ENCODE measurements at regions of chr4 and their contacts with region 1.

Region 1: DNA sequence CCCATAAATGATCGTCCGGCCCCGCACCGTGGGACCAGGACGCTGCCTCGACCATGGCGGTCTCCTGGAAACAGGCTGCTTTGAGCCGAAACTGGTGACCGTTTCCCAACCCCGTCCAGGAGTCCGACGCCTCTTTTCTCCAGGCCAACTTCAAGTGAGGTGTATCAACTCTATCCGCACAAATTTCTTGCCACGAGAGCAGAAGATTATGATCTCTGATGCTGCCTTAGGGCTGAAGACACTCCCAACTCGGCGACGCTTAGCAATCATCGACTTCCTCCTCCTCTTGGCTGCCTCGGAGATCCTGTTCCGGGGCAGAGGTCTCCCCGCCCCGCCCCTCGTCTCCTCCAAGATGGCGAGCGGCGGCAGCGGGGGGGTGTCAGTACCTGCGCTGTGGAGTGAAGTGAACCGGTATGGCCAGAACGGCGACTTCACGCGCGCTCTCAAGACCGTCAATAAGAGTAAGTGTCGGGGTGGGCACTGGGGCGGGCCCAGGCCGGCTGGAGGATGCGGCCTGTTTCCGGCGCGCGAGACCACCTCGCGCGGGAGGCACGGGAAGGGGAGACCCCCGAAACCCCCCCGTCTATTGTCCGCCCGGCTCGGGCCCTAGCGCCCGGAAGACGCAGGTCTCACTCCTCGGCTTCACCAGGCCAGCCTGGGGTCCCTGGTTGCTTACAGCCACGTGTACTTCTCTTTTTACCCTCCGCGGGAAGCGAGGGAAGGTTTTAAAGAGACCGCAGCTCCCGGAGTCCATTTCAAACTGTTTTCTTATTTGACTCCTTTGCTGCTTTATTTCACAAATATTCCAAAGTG is at the start of gene SRP72:
- DNase-seq: peak; percentile 91
- H3K4me3 Mint-ChIP-seq: peak within 1 kb of the TSS; percentile 100
- H3K27ac Mint-ChIP-seq: peak within 1 kb of the TSS; percentile 99
- H3K4me1 Mint-ChIP-seq: peaks cover 31% of the 10 kb centered on the region
- H3K27me3 Mint-ChIP-seq: no peaks in the 10 kb centered on the region
- CTCF ChIP-seq: no peak
- total RNA-seq, gene SRP72: 348 and 419 TPM in 2 replicates

Region 2: DNA sequence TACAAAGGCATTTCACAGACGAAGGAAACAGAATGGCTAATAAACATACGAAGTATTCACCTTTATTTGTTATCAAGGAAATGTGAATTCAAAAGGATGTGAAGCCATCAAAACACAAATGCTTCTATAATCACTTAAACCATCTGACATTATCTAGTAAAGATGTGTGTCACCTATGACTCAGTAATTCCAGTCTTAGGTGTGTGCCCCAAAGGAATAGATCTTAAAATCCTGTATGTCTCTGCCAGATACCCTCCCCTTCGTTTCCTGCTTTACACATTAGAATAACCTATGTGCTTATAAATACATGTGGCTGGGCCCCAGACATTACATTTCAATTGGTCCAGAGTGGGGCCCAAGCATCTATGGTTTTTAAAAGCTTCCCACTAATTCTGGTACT is 560.5 kb before region 1 on chr4:
- CTCF ChIA-PET with region 1: no interaction called
- POLR2A ChIA-PET with region 1: no interaction called
- intact Hi-C with region 1: no loop called
- DNase-seq: peak; percentile 53
- H3K4me3 Mint-ChIP-seq: no peak overlapping the region
- H3K27ac Mint-ChIP-seq: no peak overlapping the region
- H3K4me1 Mint-ChIP-seq: peaks cover 9% of the 10 kb centered on the region
- H3K27me3 Mint-ChIP-seq: no peaks in the 10 kb centered on the region
- CTCF ChIP-seq: no peak

Region 3: DNA sequence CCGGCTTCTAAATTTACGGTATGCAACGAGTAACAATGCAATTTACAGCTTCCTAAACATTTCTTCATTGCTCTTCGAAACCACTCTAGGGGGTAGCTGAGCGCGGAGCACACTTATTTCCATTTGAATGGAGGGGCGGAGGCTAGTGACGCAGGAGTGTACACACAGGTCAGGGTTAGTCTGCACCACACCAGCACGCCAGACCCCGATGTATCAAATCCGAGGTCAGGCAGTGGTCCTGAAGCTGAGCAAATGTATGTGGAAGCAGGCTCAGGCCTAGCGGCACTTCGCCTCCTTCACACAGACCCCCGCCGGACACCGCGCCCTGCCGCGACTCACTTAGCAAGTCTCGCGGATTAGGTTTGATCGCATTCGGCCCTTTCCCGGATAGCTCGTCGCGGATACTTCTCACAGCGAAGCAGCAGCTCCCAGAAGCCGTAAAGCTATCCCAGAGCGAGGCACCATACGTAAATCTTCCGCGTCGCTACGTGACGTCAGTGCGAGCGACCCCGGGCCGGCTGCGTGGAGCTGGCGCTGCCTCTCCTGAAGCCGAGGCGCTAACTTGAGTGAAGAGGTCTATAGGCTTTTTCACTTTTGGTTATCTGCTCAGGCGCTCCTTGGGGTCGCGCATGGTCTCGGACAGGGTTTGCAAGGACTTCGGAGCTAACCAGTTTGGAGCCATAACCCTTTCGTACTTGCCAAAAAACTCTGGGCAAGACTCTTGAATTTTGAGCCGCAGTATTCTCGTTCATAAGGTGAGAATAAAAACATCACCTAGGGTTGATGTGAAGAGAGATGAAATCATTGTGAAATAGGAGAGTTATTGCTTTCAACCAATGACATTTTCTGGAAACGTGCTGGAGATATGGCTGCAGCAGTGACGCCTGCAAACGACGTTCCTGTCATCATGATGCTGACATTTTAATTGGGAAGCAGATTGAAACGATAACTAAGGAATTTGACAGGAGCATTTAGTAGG is 80.2 kb before region 1 on chr4 and contains the start of gene AASDH:
- CTCF ChIA-PET with region 1: no interaction called
- POLR2A ChIA-PET with region 1: interaction called, 23 read pairs
- intact Hi-C with region 1: loop called (anchors 1 kb)
- DNase-seq: peak; percentile 94
- H3K4me3 Mint-ChIP-seq: peak within 1 kb of the TSS; percentile 96
- H3K27ac Mint-ChIP-seq: peak within 1 kb of the TSS; percentile 99
- H3K4me1 Mint-ChIP-seq: peaks cover 29% of the 10 kb centered on the region
- H3K27me3 Mint-ChIP-seq: no peaks in the 10 kb centered on the region
- CTCF ChIP-seq: no peak
- total RNA-seq, gene AASDH: 10.8 and 12.9 TPM in 2 replicates

Region 4: GRCh38 chr4:56424697-56425514 is 42.6 kb before region 1 on chr4:
- CTCF ChIA-PET with region 1: interaction called, 6 read pairs
- POLR2A ChIA-PET with region 1: interaction called, 11 read pairs
- intact Hi-C with region 1: loop called (anchors 5 kb)
- DNase-seq: peak; percentile 53
- H3K4me3 Mint-ChIP-seq: no peak overlapping the region
- H3K27ac Mint-ChIP-seq: no peak overlapping the region
- H3K4me1 Mint-ChIP-seq: peaks cover 13% of the 10 kb centered on the region
- H3K27me3 Mint-ChIP-seq: no peaks in the 10 kb centered on the region
- CTCF ChIP-seq: peak; percentile 48

Region 5: GRCh38 chr4:56480691-56481090 is 13.2 kb after region 1 on chr4:
- CTCF ChIA-PET with region 1: no interaction called
- POLR2A ChIA-PET with region 1: interaction called, 13 read pairs
- intact Hi-C with region 1: no loop called
- DNase-seq: no peak
- H3K4me3 Mint-ChIP-seq: no peak overlapping the region
- H3K27ac Mint-ChIP-seq: no peak overlapping the region
- H3K4me1 Mint-ChIP-seq: no peaks in the 10 kb centered on the region
- H3K27me3 Mint-ChIP-seq: no peaks in the 10 kb centered on the region
- CTCF ChIP-seq: no peak

Region 6: DNA sequence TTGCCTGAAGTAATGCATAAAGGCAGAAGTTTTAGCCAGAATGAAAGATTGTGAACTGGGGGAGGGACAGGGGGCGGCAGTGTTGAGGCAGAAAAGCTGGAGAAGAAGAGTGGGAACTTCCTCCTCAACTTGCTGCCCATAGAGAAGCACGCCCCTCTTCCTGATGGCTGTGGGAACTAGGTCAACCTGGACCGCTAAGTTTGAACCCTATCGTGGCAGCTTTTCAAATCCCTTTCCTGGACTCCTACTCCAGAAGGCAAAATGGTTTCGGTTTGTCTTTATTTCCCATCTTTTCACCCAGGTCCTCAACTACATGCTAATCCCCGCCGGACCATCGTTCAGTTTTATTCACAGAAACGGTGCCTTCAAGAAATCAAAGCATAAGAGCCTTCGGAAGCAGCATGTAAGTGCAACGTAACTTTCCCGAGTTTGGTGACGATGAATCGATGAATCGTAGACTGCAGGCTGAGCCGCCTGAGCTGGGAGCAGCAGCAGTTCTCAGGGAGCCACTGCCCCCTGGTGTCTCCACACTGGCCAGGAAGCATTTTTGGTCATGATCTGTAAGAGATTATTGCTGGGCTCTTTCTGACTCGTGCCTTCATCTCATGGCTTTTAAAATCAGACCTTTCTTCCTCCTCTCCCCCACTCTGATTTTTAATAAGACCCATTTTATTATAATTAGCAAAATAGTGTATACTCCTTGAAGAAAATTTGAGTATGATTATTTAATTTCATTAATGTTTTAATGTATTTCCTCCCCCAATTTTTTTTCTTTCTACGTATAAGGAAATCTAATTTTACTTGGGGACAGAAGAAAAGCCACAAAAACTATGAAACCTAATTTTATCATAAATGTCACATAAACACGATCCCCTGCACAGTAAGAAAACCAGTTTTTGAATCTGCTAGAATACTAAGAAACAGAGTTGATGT is 332.6 kb after region 1 on chr4:
- CTCF ChIA-PET with region 1: interaction called, 3 read pairs
- POLR2A ChIA-PET with region 1: interaction called, 5 read pairs
- intact Hi-C with region 1: loop called (anchors 5 kb)
- DNase-seq: peak; percentile 83
- H3K4me3 Mint-ChIP-seq: peak overlapping the region; percentile 84
- H3K27ac Mint-ChIP-seq: peak overlapping the region; percentile 81
- H3K4me1 Mint-ChIP-seq: no peaks in the 10 kb centered on the region
- H3K27me3 Mint-ChIP-seq: no peaks in the 10 kb centered on the region
- CTCF ChIP-seq: peak; percentile 87

Region 7: GRCh38 chr4:56977321-56978012 is 510.0 kb after region 1 on chr4 and contains the start of gene NOA1:
- CTCF ChIA-PET with region 1: no interaction called
- POLR2A ChIA-PET with region 1: interaction called, 40 read pairs
- intact Hi-C with region 1: no loop called
- DNase-seq: peak; percentile 99
- H3K4me3 Mint-ChIP-seq: peak within 1 kb of the TSS; percentile 97
- H3K27ac Mint-ChIP-seq: peak within 1 kb of the TSS; percentile 97
- H3K4me1 Mint-ChIP-seq: peaks cover 16% of the 10 kb centered on the region
- H3K27me3 Mint-ChIP-seq: no peaks in the 10 kb centered on the region
- CTCF ChIP-seq: no peak
- total RNA-seq, gene NOA1: 17.1 and 23.2 TPM in 2 replicates